Gastrocnemius medialis (tissue), 4 donors: ENCODE measurements at regions of chr3 and their contacts with region 1.

Region 1: GRCh38 chr3:169772897-169773828 is at the start of gene MYNN:
- DNase-seq: peak; percentile 85 to 88
- ATAC-seq: peak; percentile 86 to 88
- H3K4me3 ChIP-seq: peak within 1 kb of the TSS; percentile 76 to 99 (median 92)
- H3K27ac ChIP-seq: peak within 1 kb of the TSS; percentile 95 to 100 (median 97)
- H3K4me1 ChIP-seq: peaks cover 26 to 27% of the 10 kb centered on the region in 2 donors
- H3K27me3 ChIP-seq: no peaks in the 10 kb centered on the region
- CTCF ChIP-seq: no peak
- POLR2A ChIP-seq: peak; percentile 99
- total RNA-seq, gene MYNN: 12.0 to 20.2 (median 14.7) TPM

Region 2: DNA sequence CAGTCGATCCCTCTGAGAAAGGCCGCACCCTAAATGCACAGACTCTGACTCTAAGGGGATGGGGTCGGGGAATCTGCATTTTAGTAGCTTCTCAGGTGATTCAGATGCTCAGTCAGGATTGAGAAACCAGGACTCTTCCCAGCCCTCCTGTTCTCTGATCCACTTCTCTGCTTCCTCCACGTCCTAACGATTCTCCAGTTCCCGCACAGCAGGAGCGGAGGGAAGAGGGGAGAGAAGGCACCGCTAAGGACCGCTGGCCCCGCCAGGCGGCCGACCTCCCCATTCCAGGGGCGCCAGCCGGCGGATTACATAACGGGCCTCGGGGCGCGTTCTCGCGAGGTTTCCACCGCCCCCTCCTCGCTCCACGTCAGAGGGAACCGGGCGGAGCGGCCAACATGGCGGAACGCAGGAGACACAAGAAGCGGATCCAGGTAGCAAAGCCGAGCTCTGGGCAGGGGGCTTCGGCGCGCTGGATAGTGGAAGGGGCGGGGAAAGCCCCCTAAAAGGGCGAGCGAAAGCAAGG is 193.3 kb after region 1 on chr3 and contains the start of gene SEC62:
- in situ Hi-C with region 1: loop called in 1 of 4 experiments (anchors 10 kb)
- intact Hi-C with region 1: loop called (anchors 5 kb)
- DNase-seq: peak; percentile 82 to 86
- ATAC-seq: peak; percentile 95 to 96
- H3K4me3 ChIP-seq: peak within 1 kb of the TSS; percentile 72 to 97 (median 88)
- H3K27ac ChIP-seq: peak within 1 kb of the TSS; percentile 94 to 97 (median 96)
- H3K4me1 ChIP-seq: peaks cover 28 to 40% of the 10 kb centered on the region in 2 donors
- H3K27me3 ChIP-seq: no peaks in the 10 kb centered on the region
- CTCF ChIP-seq: peak in 4 of 5 experiments; percentile 20 to 29 (median 26)
- POLR2A ChIP-seq: peak; percentile 63 to 68
- total RNA-seq, gene SEC62: 22.6 to 42.8 (median 30.4) TPM

Region 3: GRCh38 chr3:170205302-170205701 is 432.1 kb after region 1 on chr3:
- in situ Hi-C with region 1: no loop called
- intact Hi-C with region 1: no loop called
- DNase-seq: no peak
- ATAC-seq: no peak
- H3K4me3 ChIP-seq: no peak overlapping the region
- H3K27ac ChIP-seq: no peak overlapping the region
- H3K4me1 ChIP-seq: no peaks in the 10 kb centered on the region
- H3K27me3 ChIP-seq: no peaks in the 10 kb centered on the region
- CTCF ChIP-seq: no peak
- POLR2A ChIP-seq: no peak

Region 4: DNA sequence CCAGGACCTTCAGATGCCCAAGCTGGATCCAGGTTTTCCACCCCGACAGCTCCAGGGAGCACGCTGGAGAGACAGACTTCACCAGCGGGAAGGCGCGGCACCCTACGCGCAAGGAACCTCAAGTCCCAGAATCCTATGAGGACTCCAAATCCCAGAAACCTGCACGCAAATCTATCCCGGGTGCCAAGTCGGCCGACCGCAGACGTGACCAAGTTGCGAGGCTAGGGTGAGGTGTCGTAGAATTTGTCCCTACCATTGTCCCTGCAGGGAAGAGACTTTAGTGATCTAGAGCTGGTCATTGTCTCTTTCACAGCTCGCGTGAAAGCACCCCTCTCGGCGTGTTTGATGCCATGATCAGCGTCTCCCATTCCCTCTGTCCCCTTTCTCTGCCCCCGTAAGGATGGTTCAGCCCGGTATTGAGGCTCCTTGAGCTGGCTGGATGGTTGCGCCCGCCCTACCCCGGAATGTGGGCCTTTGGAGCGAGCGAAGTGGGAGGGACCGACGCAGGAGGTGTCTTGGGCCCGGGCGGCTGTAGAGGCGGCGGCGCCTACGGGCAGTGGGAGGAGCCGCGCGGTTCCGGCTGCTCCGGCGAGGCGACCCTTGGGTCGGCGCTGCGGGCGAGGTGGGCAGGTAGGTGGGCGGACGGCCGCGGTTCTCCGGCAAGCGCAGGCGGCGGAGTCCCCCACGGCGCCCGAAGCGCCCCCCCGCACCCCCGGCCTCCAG is 448.9 kb after region 1 on chr3 and contains the start of gene PRKCI:
- in situ Hi-C with region 1: no loop called
- intact Hi-C with region 1: loop called (anchors 2 kb)
- DNase-seq: peak; percentile 93 to 95
- ATAC-seq: peak; percentile 96 to 97
- H3K4me3 ChIP-seq: peak within 1 kb of the TSS; percentile 78 to 98 (median 86)
- H3K27ac ChIP-seq: peak within 1 kb of the TSS; percentile 75 to 86 (median 84)
- H3K4me1 ChIP-seq: peaks cover 6 to 10% of the 10 kb centered on the region in 2 donors
- H3K27me3 ChIP-seq: no peaks in the 10 kb centered on the region
- CTCF ChIP-seq: no peak
- POLR2A ChIP-seq: peak; percentile 81 to 83
- total RNA-seq, gene PRKCI: 10.5 to 20.9 (median 14.0) TPM

Region 5: GRCh38 chr3:170357176-170357919 is 584.2 kb after region 1 on chr3 and contains the start of gene SKIL:
- in situ Hi-C with region 1: loop called in 1 of 4 experiments (anchors 25 kb)
- intact Hi-C with region 1: loop called (anchors 2 kb)
- DNase-seq: peak; percentile 95 to 97
- ATAC-seq: peak; percentile 77 to 83
- H3K4me3 ChIP-seq: peak within 1 kb of the TSS; percentile 86 to 93 (median 92)
- H3K27ac ChIP-seq: peak within 1 kb of the TSS; percentile 98 to 99 (median 99)
- H3K4me1 ChIP-seq: peaks cover 30 to 47% of the 10 kb centered on the region in 2 donors
- H3K27me3 ChIP-seq: no peaks in the 10 kb centered on the region
- CTCF ChIP-seq: peak in 2 of 5 experiments; percentile 3 to 11
- POLR2A ChIP-seq: peak; percentile 92 to 93
- total RNA-seq, gene SKIL: 26.7 to 45.1 (median 29.4) TPM